Heart right ventricle (tissue), 16 donors: ENCODE measurements at regions of chr11 and their contacts with region 1.

Region 1: GRCh38 chr11:17722000-17722643 is 2.8 kb downstream of the MYOD1 start:
- DNase-seq: no peak
- ATAC-seq: no peak
- H3K4me3 ChIP-seq: no peak overlapping the region
- H3K27ac ChIP-seq: no peak overlapping the region
- H3K4me1 ChIP-seq: peaks cover 0 to 32% (median 18%) of the 10 kb centered on the region in 9 donors
- H3K27me3 ChIP-seq: peaks cover 25 to 85% (median 81%) of the 10 kb centered on the region in 7 donors
- CTCF ChIP-seq: peak in 7 of 9 donors; percentile 5 to 40 (median 36)

Region 2: DNA sequence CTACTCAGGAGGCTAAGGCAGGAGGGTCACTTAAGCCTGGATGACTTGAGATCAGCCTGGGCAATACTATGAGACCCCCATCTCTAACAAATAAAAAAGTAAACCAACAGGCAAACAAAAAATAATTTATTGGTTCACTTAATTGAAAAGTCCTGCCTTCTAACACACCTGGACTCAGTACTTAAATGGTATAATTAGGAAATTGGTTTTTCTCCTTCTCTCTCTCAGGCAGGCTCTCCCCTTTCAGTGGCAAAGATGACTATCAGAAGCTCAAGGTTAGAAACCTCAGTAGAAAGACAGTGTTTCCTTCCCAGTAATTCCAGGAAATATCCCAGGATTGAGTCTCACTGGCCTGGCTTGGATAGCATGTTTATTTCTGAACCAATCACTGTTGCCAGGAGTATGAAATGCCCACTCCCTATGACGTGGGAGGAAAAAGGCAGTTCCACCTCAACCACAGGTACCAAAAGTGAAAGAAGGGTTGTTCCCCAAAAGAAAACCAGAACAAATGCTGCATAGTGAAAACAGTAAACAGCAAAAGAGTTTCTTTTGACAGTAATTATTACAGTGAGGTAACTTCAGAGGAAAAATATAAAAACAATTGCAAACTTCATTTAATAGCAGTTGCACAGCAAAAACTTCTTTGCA is 1309.5 kb before region 1 on chr11:
- intact Hi-C with region 1: no loop called
- DNase-seq: no peak
- ATAC-seq: no peak
- H3K4me3 ChIP-seq: no peak overlapping the region
- H3K27ac ChIP-seq: no peak overlapping the region
- H3K4me1 ChIP-seq: peaks cover 0 to 28% (median 0%) of the 10 kb centered on the region in 9 donors
- H3K27me3 ChIP-seq: no peaks in the 10 kb centered on the region
- CTCF ChIP-seq: no peak

Region 3: GRCh38 chr11:17598700-17599459 is 123.2 kb before region 1 on chr11:
- intact Hi-C with region 1: loop called in 9 of 10 experiments (anchors 2 to 10 kb)
- DNase-seq: peak; percentile 71 to 74
- ATAC-seq: peak; percentile 73 to 86 (median 82)
- H3K4me3 ChIP-seq: no peak overlapping the region
- H3K27ac ChIP-seq: no peak overlapping the region
- H3K4me1 ChIP-seq: no peaks in the 10 kb centered on the region
- H3K27me3 ChIP-seq: peaks cover 0 to 12% (median 7%) of the 10 kb centered on the region in 7 donors
- CTCF ChIP-seq: peak; percentile 88 to 96 (median 92)

Region 4: DNA sequence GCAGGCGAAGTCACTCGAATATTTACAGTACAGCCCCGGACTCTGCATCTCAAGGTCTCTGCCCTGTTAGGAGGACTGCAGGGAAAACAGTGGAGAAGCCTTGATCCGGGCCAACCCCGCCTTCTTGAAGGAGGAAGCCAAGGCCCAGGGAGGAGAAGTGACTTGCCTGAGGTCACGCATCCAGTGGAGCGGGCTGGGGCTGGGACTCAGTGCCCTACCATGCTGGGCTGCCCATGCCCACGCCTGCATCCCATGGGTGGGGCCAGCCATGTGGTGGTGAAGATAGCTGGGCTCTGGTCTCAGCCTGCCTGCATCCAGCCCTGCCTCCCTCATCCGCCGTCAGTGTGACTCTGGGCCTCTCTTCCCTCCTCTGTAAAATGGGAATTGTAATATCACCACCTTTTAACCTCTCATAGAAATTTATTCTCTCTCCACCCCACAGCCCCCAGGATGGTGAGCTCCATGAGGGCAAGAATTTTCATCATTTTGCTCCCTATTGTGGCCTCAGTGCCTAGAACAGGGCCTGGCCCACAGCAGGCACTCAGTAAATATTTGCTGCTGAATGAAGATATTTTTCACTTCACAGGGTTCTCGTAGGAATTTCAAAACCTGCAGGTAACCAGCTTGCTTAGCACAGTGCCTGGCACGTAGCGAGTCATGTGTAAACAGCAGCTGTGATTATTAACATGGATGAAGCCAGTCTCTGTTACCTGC is 117.8 kb before region 1 on chr11:
- intact Hi-C with region 1: loop called in 9 of 10 experiments (anchors 2 to 10 kb)
- DNase-seq: no peak
- ATAC-seq: no peak
- H3K4me3 ChIP-seq: no peak overlapping the region
- H3K27ac ChIP-seq: no peak overlapping the region
- H3K4me1 ChIP-seq: peaks cover 0 to 4% (median 0%) of the 10 kb centered on the region in 9 donors
- H3K27me3 ChIP-seq: peaks cover 0 to 13% (median 2%) of the 10 kb centered on the region in 7 donors
- CTCF ChIP-seq: no peak